ENCODE measurements at regions of chr5 and their contacts with region 1.

Region 1: GRCh38 chr5:170225326-170226128 is 7.3 kb upstream of the C5orf58 start:
- DNase-seq: peak; percentile 41 to 82
- H3K4me3 ChIP-seq: no peak overlapping the region
- H3K27ac ChIP-seq: no peak overlapping the region
- H3K4me1 ChIP-seq: no peaks in the 10 kb centered on the region
- H3K27me3 ChIP-seq: no peaks in the 10 kb centered on the region
- CTCF ChIP-seq: peak; percentile 57 to 69 (median 63)

Region 2: GRCh38 chr5:170087168-170087817 is 138.2 kb before region 1 on chr5:
- intact Hi-C with region 1: no loop called
- DNase-seq: peak in 1 of 2 donors; percentile 12
- H3K4me3 ChIP-seq: no peak overlapping the region
- H3K27ac ChIP-seq: no peak overlapping the region
- H3K4me1 ChIP-seq: no peaks in the 10 kb centered on the region
- H3K27me3 ChIP-seq: no peaks in the 10 kb centered on the region
- CTCF ChIP-seq: no peak

Region 3: DNA sequence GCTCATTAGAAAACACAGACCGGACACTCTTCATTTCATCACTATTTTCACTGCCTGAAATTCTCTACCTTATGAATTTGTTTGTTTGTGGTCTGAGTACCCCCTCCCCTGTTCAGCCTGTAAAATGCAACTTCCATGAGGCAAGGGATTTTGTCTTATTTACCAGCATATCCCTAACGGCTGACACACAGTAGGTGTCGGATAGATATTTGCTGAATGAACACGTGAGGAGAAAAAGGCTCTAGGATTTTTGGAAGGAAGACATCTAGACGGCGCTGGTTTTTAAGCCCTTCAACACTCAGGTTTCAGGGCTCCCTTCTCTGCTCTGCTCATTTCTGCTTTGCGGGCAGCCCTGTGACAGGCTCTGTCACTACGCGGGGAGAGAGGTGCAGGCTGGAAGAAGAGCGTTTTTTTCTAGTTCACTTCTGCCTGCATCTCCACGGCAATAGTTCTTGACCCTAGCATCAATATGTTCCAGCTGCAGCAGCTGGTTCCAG is 122.7 kb after region 1 on chr5:
- intact Hi-C with region 1: loop called (anchors 2 kb)
- DNase-seq: no peak
- H3K4me3 ChIP-seq: no peak overlapping the region
- H3K27ac ChIP-seq: no peak overlapping the region
- H3K4me1 ChIP-seq: no peaks in the 10 kb centered on the region
- H3K27me3 ChIP-seq: no peaks in the 10 kb centered on the region
- CTCF ChIP-seq: peak in 1 of 3 experiments; percentile 33

Region 4: GRCh38 chr5:170420780-170421412 is 195.4 kb after region 1 on chr5:
- intact Hi-C with region 1: loop called (anchors 2 kb)
- DNase-seq: peak in 1 of 2 donors; percentile 82
- H3K4me3 ChIP-seq: no peak overlapping the region
- H3K27ac ChIP-seq: no peak overlapping the region
- H3K4me1 ChIP-seq: no peaks in the 10 kb centered on the region
- H3K27me3 ChIP-seq: no peaks in the 10 kb centered on the region
- CTCF ChIP-seq: peak; percentile 54 to 84 (median 76)

Region 5: GRCh38 chr5:170623576-170624181 is 398.2 kb after region 1 on chr5:
- intact Hi-C with region 1: loop called (anchors 10 kb)
- DNase-seq: no peak
- H3K4me3 ChIP-seq: no peak overlapping the region
- H3K27ac ChIP-seq: no peak overlapping the region
- H3K4me1 ChIP-seq: no peaks in the 10 kb centered on the region
- H3K27me3 ChIP-seq: no peaks in the 10 kb centered on the region
- CTCF ChIP-seq: peak in 2 of 3 experiments; percentile 12 to 29